ENCODE measurements at regions of chr7 and their contacts with region 1.

Region 1: GRCh38 chr7:137953665-137954470 is 48.0 kb downstream of the CREB3L2 start:
- DNase-seq: peak in 1 of 3 donors; percentile 55
- ATAC-seq: peak; percentile 85
- H3K4me3 ChIP-seq: no peak overlapping the region
- H3K4me1 ChIP-seq: peaks cover 29% of the 10 kb centered on the region
- CTCF ChIP-seq: no peak

Region 2: DNA sequence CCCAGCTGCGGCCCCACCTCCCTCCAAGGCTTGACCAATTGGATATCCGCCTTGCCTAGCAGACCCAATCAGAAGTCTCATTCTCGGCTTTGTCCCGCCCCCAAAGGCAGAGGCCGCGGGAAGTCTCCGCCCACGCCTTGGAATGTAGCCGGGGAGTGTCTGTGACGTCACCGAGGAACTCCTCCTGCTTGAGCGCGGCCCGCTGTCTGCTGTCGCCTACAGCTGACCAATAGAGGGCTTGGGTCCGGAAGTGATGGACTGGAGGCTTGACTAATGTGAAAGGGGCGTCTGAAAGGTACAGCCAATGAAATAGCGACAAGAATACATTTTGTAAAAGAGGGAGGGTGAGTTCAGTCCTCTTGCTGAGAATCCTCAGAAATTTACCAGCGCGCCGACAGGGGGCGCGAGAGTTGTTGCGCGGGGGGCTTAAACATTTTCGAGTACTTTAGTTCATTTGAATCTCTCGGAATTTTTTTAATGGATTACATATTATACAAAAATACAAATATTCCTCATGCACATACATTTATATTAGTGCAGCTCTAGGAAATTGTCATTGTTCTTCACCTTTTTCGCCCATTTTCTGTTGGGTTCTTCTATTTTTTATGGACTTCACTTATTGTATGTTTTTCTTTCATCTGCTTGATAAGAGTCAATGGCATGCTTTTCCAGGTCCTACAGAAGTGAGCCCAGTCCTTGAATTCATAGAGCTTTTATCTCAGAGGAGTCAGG is 48.4 kb after region 1 on chr7:
- intact Hi-C with region 1: loop called in 1 of 2 experiments (anchors 10 kb)
- DNase-seq: peak; percentile 99
- ATAC-seq: peak; percentile 94
- H3K4me3 ChIP-seq: peak overlapping the region; percentile 75
- H3K4me1 ChIP-seq: peaks cover 9% of the 10 kb centered on the region
- CTCF ChIP-seq: peak; percentile 83

Measured in mucosa of descending colon (tissue), 3 donors.